Psoas muscle (tissue), 8 donors: ENCODE measurements at regions of chr14 and their contacts with region 1.

Region 1: DNA sequence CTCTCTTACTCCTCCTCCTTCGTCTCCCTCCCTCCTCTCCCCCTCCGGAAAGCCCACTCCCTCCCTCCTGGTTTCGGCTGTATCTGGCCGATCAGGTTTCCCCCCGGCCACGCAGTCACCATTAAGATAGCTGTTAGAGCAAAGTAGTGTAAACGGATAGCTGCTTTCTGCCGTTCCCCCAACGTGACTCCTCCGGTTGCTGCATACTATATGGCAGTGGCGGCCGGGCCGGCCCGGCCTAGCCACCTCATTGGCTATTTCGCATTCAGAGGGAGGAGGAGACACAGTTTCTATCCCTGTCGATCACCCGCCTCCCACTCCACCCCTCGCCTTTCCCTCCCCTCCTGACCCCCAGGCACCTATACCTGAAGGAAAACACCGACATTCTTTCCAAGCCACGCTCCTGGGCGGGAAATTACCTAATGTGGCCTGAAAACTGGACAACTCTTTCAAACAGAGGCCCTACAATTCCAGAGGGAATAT is at the start of gene SIX4:
- DNase-seq: peak; percentile 80 to 90
- ATAC-seq: peak; percentile 78 to 86 (median 82)
- H3K4me3 ChIP-seq: peak within 1 kb of the TSS; percentile 96
- H3K27ac ChIP-seq: peak within 1 kb of the TSS; percentile 97
- H3K4me1 ChIP-seq: peaks cover 16% of the 10 kb centered on the region
- H3K27me3 ChIP-seq: peaks cover 0 to 2% (median 0%) of the 10 kb centered on the region in 3 donors
- CTCF ChIP-seq: no peak
- total RNA-seq, gene SIX4: 24.8 to 44.8 (median 33.2) TPM

Region 2: DNA sequence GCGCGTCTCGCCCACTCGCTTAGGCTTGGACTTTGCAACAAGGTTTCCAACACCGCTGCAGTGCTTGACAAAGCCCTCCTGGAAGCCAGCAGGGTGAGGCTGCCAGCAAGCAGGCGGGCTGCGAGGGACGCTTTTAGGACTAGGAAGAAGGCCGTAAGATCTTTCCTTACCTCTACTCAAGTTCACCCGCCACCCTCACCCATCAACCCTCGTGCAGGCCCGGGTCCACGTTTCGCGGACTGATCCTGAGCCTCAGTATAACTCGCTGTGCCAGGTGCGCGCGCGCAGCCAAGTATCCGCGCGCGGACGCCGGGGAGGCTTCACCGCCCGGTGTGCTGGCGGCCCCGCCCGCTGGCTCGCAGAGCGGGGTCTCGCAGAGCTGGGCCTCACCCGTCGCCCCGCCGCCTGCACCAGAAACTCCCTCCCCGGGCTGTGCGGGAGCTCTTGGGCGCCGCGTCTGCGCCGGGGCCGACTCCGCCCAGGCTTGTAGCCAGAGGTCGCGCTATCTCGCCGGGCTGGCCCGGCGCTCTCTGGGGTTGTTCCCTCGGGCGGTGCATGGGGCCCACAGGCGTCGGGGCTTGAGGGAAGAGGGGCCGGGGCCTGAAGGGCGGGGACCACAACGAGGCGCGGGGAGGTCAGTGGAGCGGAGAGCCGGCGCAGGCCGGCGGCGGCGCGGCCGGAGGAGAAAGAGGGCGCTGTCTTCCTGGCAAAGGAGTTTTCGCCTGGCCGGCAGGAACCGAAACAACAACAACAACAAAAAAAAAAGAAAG is 67.3 kb before region 1 on chr14:
- intact Hi-C with region 1: loop called (anchors 2 to 5 kb)
- DNase-seq: peak; percentile 71 to 88
- ATAC-seq: peak; percentile 72 to 78 (median 76)
- H3K4me3 ChIP-seq: peak overlapping the region; percentile 91
- H3K27ac ChIP-seq: peak overlapping the region; percentile 93
- H3K4me1 ChIP-seq: peaks cover 13% of the 10 kb centered on the region
- H3K27me3 ChIP-seq: no peaks in the 10 kb centered on the region
- CTCF ChIP-seq: peak; percentile 46

Region 3: DNA sequence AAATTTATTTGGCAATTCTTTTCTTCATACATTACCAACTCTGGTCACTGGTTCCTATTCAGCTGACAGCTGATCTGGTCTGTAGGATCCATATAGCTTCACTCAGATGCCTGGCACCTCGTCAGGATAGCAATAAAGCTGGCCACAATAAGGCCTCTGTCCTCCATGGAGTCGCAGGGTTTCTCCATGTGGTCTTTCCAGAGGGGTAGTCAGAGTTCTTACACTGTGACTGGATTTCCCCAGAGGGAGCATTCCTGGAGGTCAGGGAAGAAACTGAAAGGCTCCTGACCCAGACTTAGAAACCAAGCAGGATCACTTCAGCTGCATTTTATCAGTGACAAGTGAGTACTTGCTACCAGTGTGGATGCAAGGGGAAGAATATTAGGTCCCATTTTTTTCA is 40.0 kb before region 1 on chr14:
- intact Hi-C with region 1: no loop called
- DNase-seq: no peak
- ATAC-seq: no peak
- H3K4me3 ChIP-seq: no peak overlapping the region
- H3K27ac ChIP-seq: no peak overlapping the region
- H3K4me1 ChIP-seq: no peaks in the 10 kb centered on the region
- H3K27me3 ChIP-seq: no peaks in the 10 kb centered on the region
- CTCF ChIP-seq: no peak

Region 4: GRCh38 chr14:60867503-60868172 is 143.5 kb after region 1 on chr14:
- intact Hi-C with region 1: loop called in 1 of 2 experiments (anchors 5 kb)
- DNase-seq: no peak
- ATAC-seq: no peak
- H3K4me3 ChIP-seq: no peak overlapping the region
- H3K27ac ChIP-seq: peak overlapping the region; percentile 74
- H3K4me1 ChIP-seq: peaks cover 60% of the 10 kb centered on the region
- H3K27me3 ChIP-seq: no peaks in the 10 kb centered on the region
- CTCF ChIP-seq: no peak

Region 5: GRCh38 chr14:61125867-61126572 is 401.8 kb after region 1 on chr14:
- intact Hi-C with region 1: loop called in 1 of 2 experiments (anchors 5 kb)
- DNase-seq: peak; percentile 75 to 89
- ATAC-seq: peak; percentile 71 to 77 (median 74)
- H3K4me3 ChIP-seq: peak overlapping the region; percentile 37
- H3K27ac ChIP-seq: peak overlapping the region; percentile 97
- H3K4me1 ChIP-seq: peaks cover 57% of the 10 kb centered on the region
- H3K27me3 ChIP-seq: no peaks in the 10 kb centered on the region
- CTCF ChIP-seq: no peak

Region 6: GRCh38 chr14:61188978-61189808 is 465.0 kb after region 1 on chr14:
- intact Hi-C with region 1: loop called in 1 of 2 experiments (anchors 5 kb)
- DNase-seq: peak; percentile 76 to 89
- ATAC-seq: peak; percentile 78 to 87 (median 84)
- H3K4me3 ChIP-seq: peak overlapping the region; percentile 68
- H3K27ac ChIP-seq: peak overlapping the region; percentile 94
- H3K4me1 ChIP-seq: peaks cover 36% of the 10 kb centered on the region
- H3K27me3 ChIP-seq: no peaks in the 10 kb centered on the region
- CTCF ChIP-seq: peak; percentile 67

Region 7: GRCh38 chr14:61203081-61203753 is 479.0 kb after region 1 on chr14:
- intact Hi-C with region 1: loop called in 1 of 2 experiments (anchors 10 kb)
- DNase-seq: no peak
- ATAC-seq: peak; percentile 88 to 95 (median 92)
- H3K4me3 ChIP-seq: peak overlapping the region; percentile 45
- H3K27ac ChIP-seq: peak overlapping the region; percentile 92
- H3K4me1 ChIP-seq: peaks cover 25% of the 10 kb centered on the region
- H3K27me3 ChIP-seq: no peaks in the 10 kb centered on the region
- CTCF ChIP-seq: no peak

Region 8: DNA sequence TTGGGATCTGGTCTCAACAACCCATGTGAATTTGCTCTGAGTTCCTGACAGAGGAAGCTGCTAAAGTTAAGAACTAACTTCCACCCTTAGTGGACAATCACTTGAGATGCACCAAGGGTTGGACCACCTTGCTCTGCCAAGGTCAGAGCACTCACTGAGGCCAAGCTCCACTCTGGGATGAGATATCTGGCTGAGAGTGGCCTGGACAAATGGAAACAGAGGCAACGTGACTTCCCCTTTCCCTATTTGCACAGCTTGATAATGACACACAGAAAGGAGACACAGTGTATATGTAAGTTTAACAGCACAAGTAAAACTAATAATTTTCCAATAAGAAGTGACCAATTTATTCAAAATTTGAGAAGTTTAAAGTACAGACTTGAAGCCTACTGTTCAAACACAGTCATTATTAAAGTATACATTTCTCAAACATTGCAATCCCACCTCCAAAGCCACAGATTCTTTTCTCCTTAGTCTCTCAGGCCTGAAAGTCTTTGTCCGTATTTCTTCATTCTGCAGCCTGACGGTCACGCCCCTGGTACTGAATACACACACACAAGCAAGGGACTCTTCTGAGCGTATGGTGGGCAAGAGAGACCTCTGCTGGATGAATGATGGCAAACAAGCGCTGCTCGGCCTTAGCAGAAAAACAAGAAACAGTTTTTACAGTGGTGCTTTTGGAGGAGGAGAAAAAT is 528.3 kb after region 1 on chr14:
- intact Hi-C with region 1: loop called in 1 of 2 experiments (anchors 10 kb)
- DNase-seq: peak; percentile 68 to 79
- ATAC-seq: peak; percentile 89 to 94 (median 92)
- H3K4me3 ChIP-seq: peak overlapping the region; percentile 19
- H3K27ac ChIP-seq: peak overlapping the region; percentile 72
- H3K4me1 ChIP-seq: peaks cover 41% of the 10 kb centered on the region
- H3K27me3 ChIP-seq: no peaks in the 10 kb centered on the region
- CTCF ChIP-seq: peak; percentile 88